Left cardiac atrium (tissue), 4 donors: ENCODE measurements at regions of chr3 and their contacts with region 1.

Region 1: GRCh38 chr3:55169608-55170010 is 241.8 kb upstream of the LRTM1 start:
- DNase-seq: no peak
- ATAC-seq: no peak

Region 2: GRCh38 chr3:54870423-54870822 is 299.2 kb before region 1 on chr3:
- intact Hi-C with region 1: loop called in 1 of 2 experiments (anchors 10 kb)
- DNase-seq: no peak
- ATAC-seq: peak; percentile 71 to 89

Region 3: GRCh38 chr3:55091381-55092225 is 78.0 kb before region 1 on chr3:
- intact Hi-C with region 1: no loop called
- DNase-seq: no peak
- ATAC-seq: no peak